ENCODE measurements at regions of chr10 and their contacts with region 1.

Region 1: DNA sequence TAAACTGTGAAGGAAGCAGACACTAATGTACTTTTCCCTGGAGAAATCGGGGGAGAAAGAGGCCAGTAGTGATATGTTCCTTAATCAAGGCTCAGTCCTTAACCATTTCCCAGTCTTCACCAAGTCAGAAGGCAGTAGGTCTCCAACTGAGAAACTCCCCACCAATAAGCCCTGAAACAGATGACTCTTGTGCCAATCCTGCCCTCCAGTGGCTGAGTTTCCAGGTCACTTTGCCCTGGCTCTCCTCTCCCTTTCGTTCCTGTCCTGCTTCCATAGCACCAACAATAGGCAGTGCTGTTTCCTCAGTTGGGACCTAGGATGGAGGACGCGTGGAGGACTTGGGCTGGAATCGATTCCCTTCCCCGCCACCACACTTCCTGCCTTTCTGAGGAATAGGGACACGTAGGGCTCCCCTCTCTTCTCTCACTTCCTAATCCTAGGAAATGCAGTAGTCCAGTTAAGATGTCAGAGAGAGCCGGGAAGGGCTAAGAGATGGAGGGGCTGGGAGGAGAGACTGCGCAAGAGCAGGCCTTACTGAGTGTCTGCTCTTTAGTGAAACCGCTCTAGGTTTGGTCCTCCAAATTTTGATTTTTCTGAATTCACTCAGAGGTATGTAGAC is 23.4 kb downstream of the ATOH7 start:
- DNase-seq: peak in 9 of 10 donors; percentile 29 to 73 (median 58)
- H3K4me3 ChIP-seq: no peak overlapping the region
- H3K27ac ChIP-seq: no peak overlapping the region
- H3K27me3 ChIP-seq: no peaks in the 10 kb centered on the region
- CTCF ChIP-seq: peak in 53 of 56 donors; percentile 30 to 74 (median 57)

Region 2: GRCh38 chr10:67861750-67862460 is 346.6 kb before region 1 on chr10:
- intact Hi-C with region 1: loop called in 1 of 2 experiments (anchors 5 kb)
- DNase-seq: no peak
- H3K4me3 ChIP-seq: no peak overlapping the region
- H3K27ac ChIP-seq: no peak overlapping the region
- H3K27me3 ChIP-seq: no peaks in the 10 kb centered on the region
- CTCF ChIP-seq: no peak

Region 3: DNA sequence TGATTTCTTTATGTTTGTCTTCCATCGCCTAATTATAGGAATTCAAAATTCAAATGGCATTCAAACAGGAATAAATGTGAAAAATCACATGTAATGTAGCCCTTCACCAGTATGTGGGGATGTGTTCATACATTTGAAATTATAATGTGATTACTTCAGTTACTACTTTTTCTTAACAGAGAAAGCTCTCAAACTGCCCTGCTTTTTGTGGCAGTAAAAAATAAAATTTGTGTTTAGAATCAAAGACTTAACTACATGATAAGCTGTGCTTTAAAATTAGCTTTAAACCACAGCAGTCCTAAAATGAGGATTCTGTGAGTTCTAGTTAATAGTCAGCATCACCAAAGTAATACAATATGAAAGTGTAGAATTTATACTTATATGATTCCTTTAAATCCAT is 125.7 kb before region 1 on chr10:
- intact Hi-C with region 1: loop called (anchors 5 to 10 kb)
- DNase-seq: no peak
- H3K4me3 ChIP-seq: no peak overlapping the region
- H3K27ac ChIP-seq: peak overlapping the region in 27 of 59 donors; percentile 6 to 80 (median 42)
- H3K27me3 ChIP-seq: no peaks in the 10 kb centered on the region
- CTCF ChIP-seq: peak; percentile 27 to 74 (median 56)

Region 4: GRCh38 chr10:68301790-68302502 is 93.4 kb after region 1 on chr10:
- intact Hi-C with region 1: loop called (anchors 2 to 5 kb)
- DNase-seq: no peak
- H3K4me3 ChIP-seq: peak overlapping the region in 1 of 59 donors; percentile 36
- H3K27ac ChIP-seq: peak overlapping the region in 14 of 59 donors; percentile 0 to 59 (median 22)
- H3K27me3 ChIP-seq: no peaks in the 10 kb centered on the region
- CTCF ChIP-seq: peak; percentile 39 to 84 (median 68)

Region 5: GRCh38 chr10:68406815-68407548 is 198.4 kb after region 1 on chr10 and contains the start of gene RUFY2:
- intact Hi-C with region 1: no loop called
- DNase-seq: peak; percentile 60 to 88 (median 76)
- H3K4me3 ChIP-seq: peak within 1 kb of the TSS; percentile 67 to 99 (median 95)
- H3K27ac ChIP-seq: peak within 1 kb of the TSS; percentile 77 to 99 (median 97)
- H3K27me3 ChIP-seq: no peaks in the 10 kb centered on the region
- CTCF ChIP-seq: peak in 53 of 56 donors; percentile 5 to 97 (median 62)
- total RNA-seq, gene RUFY2: 64.5 to 128 (median 91.0) TPM